Activated T-helper 2 cell treated with anti-CD3 and anti-CD28 coated beads, Interferon-gamma antibody, Interleukin-2, Interleukin-4, amounts not matched to agents 10 μg/mL and 5 μg/mL and 100 μg/mL, durations not matched to agents 14 hours and 24 hours and 36 hours (primary cell): ENCODE measurements at regions of chr19 and their contacts with region 1.

Region 1: DNA sequence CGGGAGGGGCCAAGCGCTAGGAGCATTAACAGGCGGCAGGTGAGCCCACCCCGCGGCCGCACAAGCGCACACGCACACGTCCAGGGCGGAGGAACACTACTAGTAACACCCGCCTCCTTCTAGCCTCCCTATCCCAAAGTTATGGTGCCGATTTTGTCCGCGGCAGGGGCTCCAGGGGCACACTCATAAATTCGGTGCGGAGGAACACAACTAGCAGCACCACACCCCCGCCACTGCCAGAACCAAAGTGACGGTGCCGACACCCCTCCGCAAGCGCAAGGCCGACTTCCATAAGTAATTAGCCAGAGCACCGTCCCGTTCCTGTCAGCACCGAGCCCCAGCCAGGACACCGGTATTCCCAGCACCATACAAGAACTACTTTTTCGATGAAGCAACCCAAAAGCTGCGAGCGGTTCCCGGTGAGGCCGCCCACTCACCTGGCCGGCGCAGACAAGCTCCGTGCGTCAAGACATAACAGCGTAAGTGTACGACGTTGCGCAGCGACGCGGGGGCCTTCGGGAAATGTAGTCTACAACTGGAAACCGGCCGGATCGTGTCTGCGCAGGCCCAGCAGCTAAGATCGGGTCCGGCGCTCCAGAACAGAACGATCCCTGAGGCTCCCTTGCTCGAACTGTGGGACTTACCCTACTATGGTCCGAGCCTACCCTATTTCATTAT is at the starts of genes ZNF540 and ZNF571:
- DNase-seq: peak; percentile 82
- H3K4me3 Mint-ChIP-seq: peak within 1 kb of the TSS; percentile 90
- H3K27ac Mint-ChIP-seq: peak within 1 kb of the TSS; percentile 88
- H3K4me1 Mint-ChIP-seq: peaks cover 17% of the 10 kb centered on the region
- H3K27me3 Mint-ChIP-seq: no peaks in the 10 kb centered on the region
- total RNA-seq, gene ZNF540: 0.41 and 0.46 TPM in 2 replicates
- total RNA-seq, gene ZNF571: 0.50 and 0.67 TPM in 2 replicates

Region 2: GRCh38 chr19:37313335-37313627 is 281.2 kb before region 1 on chr19:
- intact Hi-C with region 1: loop called (anchors 1 kb)
- DNase-seq: no peak
- H3K4me3 Mint-ChIP-seq: peak overlapping the region; percentile 27
- H3K27ac Mint-ChIP-seq: no peak overlapping the region
- H3K4me1 Mint-ChIP-seq: peaks cover 13% of the 10 kb centered on the region
- H3K27me3 Mint-ChIP-seq: no peaks in the 10 kb centered on the region

Region 3: DNA sequence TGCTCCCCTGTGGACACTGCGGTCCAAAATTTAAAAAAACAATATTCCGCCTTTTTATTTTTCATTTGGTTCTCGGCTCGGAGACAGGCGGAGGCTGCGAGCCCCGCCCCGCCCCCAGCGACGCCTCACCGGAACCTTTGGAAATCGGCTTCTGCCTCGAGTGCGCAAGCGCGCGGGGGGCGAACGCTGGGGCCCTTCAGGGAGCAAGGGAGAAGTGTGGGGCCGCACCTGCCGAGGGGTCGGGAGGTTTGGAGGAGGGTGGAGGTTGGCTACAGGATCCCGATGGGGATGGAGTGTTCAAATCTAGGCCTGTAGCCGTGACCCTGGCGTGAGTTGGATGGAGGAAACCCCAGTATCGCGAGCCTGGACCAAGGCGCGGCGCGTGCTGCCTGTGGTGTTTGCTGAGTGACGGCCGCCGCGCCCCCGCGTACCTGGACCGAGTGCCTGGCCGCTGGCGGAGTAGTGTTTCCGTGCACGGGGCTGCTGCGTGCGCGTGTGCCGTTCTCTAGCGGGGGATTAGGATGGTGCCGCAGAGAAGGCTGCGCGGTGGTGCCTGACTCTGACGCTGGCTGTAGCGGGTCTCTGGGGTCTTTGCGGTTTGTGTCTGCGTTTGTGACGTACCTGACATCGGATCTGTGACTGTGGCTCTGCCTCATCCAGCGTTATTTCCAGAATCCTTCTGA is 61.4 kb after region 1 on chr19:
- intact Hi-C with region 1: loop called (anchors 1 kb)
- DNase-seq: peak; percentile 85
- H3K4me3 Mint-ChIP-seq: peak overlapping the region; percentile 83
- H3K27ac Mint-ChIP-seq: peak overlapping the region; percentile 93
- H3K4me1 Mint-ChIP-seq: peaks cover 22% of the 10 kb centered on the region
- H3K27me3 Mint-ChIP-seq: no peaks in the 10 kb centered on the region

Region 4: GRCh38 chr19:37779127-37780005 is 184.9 kb after region 1 on chr19 and contains the start of gene ZNF573:
- intact Hi-C with region 1: loop called (anchors 1 kb)
- DNase-seq: peak; percentile 67
- H3K4me3 Mint-ChIP-seq: peak within 1 kb of the TSS; percentile 96
- H3K27ac Mint-ChIP-seq: peak within 1 kb of the TSS; percentile 88
- H3K4me1 Mint-ChIP-seq: peaks cover 11% of the 10 kb centered on the region
- H3K27me3 Mint-ChIP-seq: no peaks in the 10 kb centered on the region
- total RNA-seq, gene ZNF573: 3.1 and 3.6 TPM in 2 replicates